ENCODE measurements at regions of chr14 and their contacts with region 1.

Region 1: GRCh38 chr14:24160850-24161804 is at the start of gene IRF9:
- DNase-seq: peak; percentile 98
- ATAC-seq: peak; percentile 91
- H3K4me3 ChIP-seq: peak within 1 kb of the TSS; percentile 99
- H3K27ac ChIP-seq: peak within 1 kb of the TSS; percentile 96
- H3K4me1 ChIP-seq: peaks cover 38% of the 10 kb centered on the region
- H3K27me3 ChIP-seq: no peaks in the 10 kb centered on the region
- CTCF ChIP-seq: peak; percentile 92 to 99 (median 98); a peak in 5 of 6 replicates
- EP300 ChIP-seq: peak in 1 of 2 experiments; percentile 52; a peak in 1 of 4 replicates
- POLR2A ChIP-seq: peak; percentile 98
- RAD21 ChIP-seq: peak; percentile 65
- polyA plus RNA-seq, gene IRF9: 47.6 to 58.7 TPM

Region 2: GRCh38 chr14:24013654-24014514 is 147.2 kb before region 1 on chr14:
- CTCF ChIA-PET with region 1: interaction called, 5 read pairs
- POLR2A ChIA-PET with region 1: no interaction called
- RAD21 ChIA-PET with region 1: interaction called, 4 read pairs
- SMC1A ChIA-PET with region 1: no interaction called
- in situ Hi-C with region 1: no loop called
- intact Hi-C with region 1: loop called (anchors 1 kb)
- DNase-seq: peak; percentile 57
- ATAC-seq: peak; percentile 96
- H3K4me3 ChIP-seq: no peak overlapping the region
- H3K27ac ChIP-seq: no peak overlapping the region
- H3K4me1 ChIP-seq: no peaks in the 10 kb centered on the region
- H3K27me3 ChIP-seq: no peaks in the 10 kb centered on the region
- CTCF ChIP-seq: peak; percentile 77 to 91 (median 81)
- EP300 ChIP-seq: no peak
- POLR2A ChIP-seq: no peak
- RAD21 ChIP-seq: peak; percentile 97

Region 3: GRCh38 chr14:24093901-24094761 is 67.0 kb before region 1 on chr14 and contains the start of gene PCK2:
- CTCF ChIA-PET with region 1: interaction called, 55 read pairs
- POLR2A ChIA-PET with region 1: interaction called, 39 read pairs
- RAD21 ChIA-PET with region 1: interaction called, 26 read pairs
- SMC1A ChIA-PET with region 1: interaction called, 31 read pairs
- in situ Hi-C with region 1: no loop called
- intact Hi-C with region 1: loop called (anchors 1 kb)
- DNase-seq: no peak
- ATAC-seq: peak; percentile 79
- H3K4me3 ChIP-seq: peak within 1 kb of the TSS; percentile 98
- H3K27ac ChIP-seq: peak within 1 kb of the TSS; percentile 99
- H3K4me1 ChIP-seq: 0 out of 2 replicates have a peak, but pooled peaks cover 3% of the 10 kb centered on the region
- H3K27me3 ChIP-seq: no peaks in the 10 kb centered on the region
- CTCF ChIP-seq: no peak
- EP300 ChIP-seq: no peak
- POLR2A ChIP-seq: peak; percentile 91
- RAD21 ChIP-seq: no peak
- polyA plus RNA-seq, gene PCK2: 6.6 to 12.3 TPM

Region 4: DNA sequence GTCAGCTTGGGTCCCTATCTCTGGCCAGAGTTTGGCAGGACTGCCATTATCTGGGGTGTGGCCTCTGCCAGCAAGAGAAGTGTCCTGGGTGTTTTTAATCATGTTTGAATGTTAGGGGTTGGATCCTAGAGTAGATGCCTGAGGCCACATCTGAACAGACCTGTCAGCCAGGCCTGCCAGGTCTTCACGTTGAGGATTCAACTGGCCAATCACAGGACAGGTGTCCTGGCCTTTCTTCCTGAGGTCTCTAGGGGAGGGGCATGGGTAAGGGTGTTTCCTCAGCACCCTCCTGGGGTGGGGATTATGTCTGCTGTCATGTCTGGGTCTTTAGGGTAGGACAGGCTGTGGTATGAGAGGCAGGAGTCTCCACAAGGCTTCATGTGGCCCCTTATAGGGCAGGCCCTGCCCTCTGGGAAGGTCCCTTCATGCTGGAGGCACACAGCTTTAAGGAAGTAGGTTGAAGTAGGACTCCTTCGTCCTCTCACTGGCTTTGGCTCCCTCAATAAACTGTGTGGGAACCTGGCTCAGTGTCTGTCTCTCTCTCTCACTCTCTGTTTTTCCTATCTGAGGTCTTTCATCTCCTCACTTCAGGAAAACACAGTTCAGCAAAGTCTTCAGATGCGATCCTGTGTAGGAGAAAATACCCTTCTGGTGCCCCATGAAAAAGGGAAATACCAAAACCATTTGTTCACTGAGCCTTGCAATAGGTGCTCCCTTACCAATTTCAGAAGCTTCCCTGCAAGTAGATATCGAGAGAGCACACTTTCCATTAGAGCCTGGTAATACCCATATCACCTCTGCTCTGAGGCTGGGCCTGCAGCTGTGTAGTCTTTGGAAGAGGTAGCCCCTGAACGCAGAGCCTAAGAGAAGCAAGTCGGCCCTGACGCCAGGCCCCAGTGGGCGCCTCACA is 37.4 kb before region 1 on chr14:
- CTCF ChIA-PET with region 1: interaction called, 4 read pairs
- POLR2A ChIA-PET with region 1: interaction called, 6 read pairs
- RAD21 ChIA-PET with region 1: interaction called, 11 read pairs
- SMC1A ChIA-PET with region 1: interaction called, 5 read pairs
- in situ Hi-C with region 1: no loop called
- intact Hi-C with region 1: no loop called
- DNase-seq: no peak
- ATAC-seq: peak; percentile 92
- H3K4me3 ChIP-seq: no peak overlapping the region
- H3K27ac ChIP-seq: peak overlapping the region; percentile 78
- H3K4me1 ChIP-seq: peaks cover 25% of the 10 kb centered on the region
- H3K27me3 ChIP-seq: no peaks in the 10 kb centered on the region
- CTCF ChIP-seq: no peak
- EP300 ChIP-seq: no peak
- POLR2A ChIP-seq: peak; percentile 43; the same call in 1 of the 2 replicates
- RAD21 ChIP-seq: no peak

Region 5: GRCh38 chr14:24146978-24147760 is 14.0 kb before region 1 on chr14 and contains the start of gene RNF31:
- CTCF ChIA-PET with region 1: interaction called, 63 read pairs
- POLR2A ChIA-PET with region 1: interaction called, 99 read pairs
- RAD21 ChIA-PET with region 1: interaction called, 36 read pairs
- SMC1A ChIA-PET with region 1: interaction called, 54 read pairs
- in situ Hi-C with region 1: no loop called
- intact Hi-C with region 1: loop called (anchors 1 kb)
- DNase-seq: peak; percentile 92
- ATAC-seq: peak; percentile 93
- H3K4me3 ChIP-seq: peak within 1 kb of the TSS; percentile 82
- H3K27ac ChIP-seq: peak within 1 kb of the TSS; percentile 94
- H3K4me1 ChIP-seq: peaks cover 11% of the 10 kb centered on the region
- H3K27me3 ChIP-seq: no peaks in the 10 kb centered on the region
- CTCF ChIP-seq: no peak
- EP300 ChIP-seq: no peak
- POLR2A ChIP-seq: peak; percentile 28
- RAD21 ChIP-seq: no peak
- polyA plus RNA-seq, gene RNF31: 8.5 to 19.0 TPM

Region 6: DNA sequence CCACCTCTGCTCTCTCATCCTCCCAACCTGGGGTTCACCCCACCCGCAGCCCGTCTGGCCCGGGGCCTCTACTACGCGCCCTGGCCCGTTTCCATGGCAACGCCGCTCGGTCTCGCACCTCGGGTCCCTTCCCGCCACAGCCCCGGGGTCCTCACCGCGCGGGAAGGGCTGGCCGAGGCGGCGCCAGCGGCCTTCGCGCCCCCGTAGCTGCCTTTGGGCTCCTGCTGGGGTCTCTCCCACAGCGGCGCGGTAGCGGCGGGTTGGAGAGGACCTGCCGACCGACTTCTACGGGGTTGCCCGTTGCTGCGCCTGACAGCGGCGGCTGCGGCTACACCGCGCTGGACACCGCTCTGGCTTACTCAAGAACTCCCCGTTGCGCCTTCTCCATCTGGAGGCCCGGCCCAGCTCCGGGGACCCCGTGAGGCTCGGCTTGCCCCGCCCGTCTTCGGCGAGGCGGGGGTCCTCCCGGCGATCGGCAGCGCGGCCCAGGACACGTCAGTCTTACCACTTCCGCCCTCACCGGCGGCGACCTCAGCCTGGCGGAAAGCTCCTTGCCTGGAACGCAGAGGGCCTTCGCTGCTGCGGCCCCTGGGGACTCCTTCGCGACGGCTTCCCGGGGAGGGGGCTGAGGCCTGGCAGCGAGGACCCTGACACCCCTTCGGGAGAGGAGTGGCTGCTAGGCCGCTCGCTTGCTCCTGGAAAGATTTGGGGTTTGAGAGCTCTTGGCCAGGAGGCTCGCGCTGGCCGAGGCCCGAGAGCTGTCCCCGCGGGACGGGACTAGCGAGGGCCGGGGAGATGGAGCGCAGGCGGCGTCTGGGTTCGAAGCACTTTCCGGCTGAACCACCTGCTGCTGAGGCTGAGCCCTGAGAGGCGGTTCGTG is 34.3 kb after region 1 on chr14 and contains the start of gene TM9SF1:
- CTCF ChIA-PET with region 1: interaction called, 7 read pairs
- POLR2A ChIA-PET with region 1: interaction called, 28 read pairs
- RAD21 ChIA-PET with region 1: interaction called, 9 read pairs
- SMC1A ChIA-PET with region 1: no interaction called
- in situ Hi-C with region 1: no loop called
- intact Hi-C with region 1: no loop called
- DNase-seq: peak; percentile 52
- ATAC-seq: peak; percentile 93
- H3K4me3 ChIP-seq: peak within 1 kb of the TSS; percentile 68
- H3K27ac ChIP-seq: peak within 1 kb of the TSS; percentile 96
- H3K4me1 ChIP-seq: peaks cover 15% of the 10 kb centered on the region
- H3K27me3 ChIP-seq: no peaks in the 10 kb centered on the region
- CTCF ChIP-seq: no peak
- EP300 ChIP-seq: no peak
- POLR2A ChIP-seq: peak; percentile 95
- RAD21 ChIP-seq: no peak
- polyA plus RNA-seq, gene TM9SF1: 7.2 to 9.8 TPM

Region 7: DNA sequence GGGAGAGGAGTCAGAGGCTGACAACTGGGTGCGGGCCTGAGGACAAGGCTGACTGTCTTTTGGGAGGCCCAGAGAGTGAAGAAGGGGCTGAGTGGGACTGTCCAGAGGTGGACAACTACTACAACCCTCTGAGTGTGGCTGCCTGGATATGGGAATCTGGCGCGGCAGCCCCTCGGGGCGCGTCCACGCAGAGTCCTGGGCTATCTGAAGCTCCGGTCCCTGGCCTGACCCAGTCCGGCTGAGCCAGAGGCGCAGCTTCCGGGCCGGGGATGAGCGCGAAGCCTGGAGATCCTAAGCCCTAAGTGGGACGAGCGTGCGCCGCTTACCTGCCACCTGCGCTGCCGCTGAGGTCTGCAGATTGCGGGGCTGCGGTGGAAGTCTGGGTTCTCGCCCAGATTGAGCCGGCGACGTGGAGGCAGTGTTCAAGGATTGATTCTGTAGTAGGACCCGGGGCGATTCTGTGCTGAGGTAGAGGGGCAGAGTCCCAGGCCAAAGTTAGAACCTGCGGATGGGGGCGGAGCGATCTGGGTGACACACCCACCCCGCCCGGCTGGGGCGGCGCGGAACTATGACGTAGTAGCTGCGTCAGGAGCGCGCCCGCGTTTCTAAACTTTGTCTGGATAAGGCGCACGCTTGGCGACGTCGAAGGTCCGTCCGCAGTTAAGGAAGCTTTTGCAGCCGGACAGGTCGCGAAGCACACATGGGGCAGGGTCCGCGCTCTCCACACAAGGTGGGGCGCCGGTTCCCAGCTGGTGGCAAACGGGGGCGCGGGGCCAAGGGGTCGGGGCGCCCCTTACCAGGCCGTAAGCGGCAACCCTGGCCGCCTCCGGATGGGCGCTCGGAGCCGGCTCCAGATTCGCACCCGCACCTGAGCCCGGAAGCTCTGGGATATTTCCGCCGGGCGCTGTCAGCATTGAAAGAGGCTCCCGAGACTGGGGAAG is 138.4 kb after region 1 on chr14 and contains the starts of genes DHRS1 and NOP9:
- CTCF ChIA-PET with region 1: interaction called, 13 read pairs
- POLR2A ChIA-PET with region 1: interaction called, 8 read pairs
- RAD21 ChIA-PET with region 1: interaction called, 12 read pairs
- SMC1A ChIA-PET with region 1: interaction called, 10 read pairs
- in situ Hi-C with region 1: no loop called
- intact Hi-C with region 1: no loop called
- DNase-seq: peak; percentile 65
- ATAC-seq: peak; percentile 79
- H3K4me3 ChIP-seq: peak within 1 kb of the TSS; percentile 96
- H3K27ac ChIP-seq: peak within 1 kb of the TSS; percentile 51
- H3K4me1 ChIP-seq: peaks cover 25% of the 10 kb centered on the region
- H3K27me3 ChIP-seq: no peaks in the 10 kb centered on the region
- CTCF ChIP-seq: no peak
- EP300 ChIP-seq: no peak
- POLR2A ChIP-seq: peak; percentile 85
- RAD21 ChIP-seq: no peak
- polyA plus RNA-seq, gene DHRS1: 44.6 to 45.0 TPM
- polyA plus RNA-seq, gene NOP9: 2.4 to 3.4 TPM

Measured in GM12878 (cell line).